Cardiac septum (tissue), 1 donor: ENCODE measurements at regions of chr1 and their contacts with region 1.

Region 1: DNA sequence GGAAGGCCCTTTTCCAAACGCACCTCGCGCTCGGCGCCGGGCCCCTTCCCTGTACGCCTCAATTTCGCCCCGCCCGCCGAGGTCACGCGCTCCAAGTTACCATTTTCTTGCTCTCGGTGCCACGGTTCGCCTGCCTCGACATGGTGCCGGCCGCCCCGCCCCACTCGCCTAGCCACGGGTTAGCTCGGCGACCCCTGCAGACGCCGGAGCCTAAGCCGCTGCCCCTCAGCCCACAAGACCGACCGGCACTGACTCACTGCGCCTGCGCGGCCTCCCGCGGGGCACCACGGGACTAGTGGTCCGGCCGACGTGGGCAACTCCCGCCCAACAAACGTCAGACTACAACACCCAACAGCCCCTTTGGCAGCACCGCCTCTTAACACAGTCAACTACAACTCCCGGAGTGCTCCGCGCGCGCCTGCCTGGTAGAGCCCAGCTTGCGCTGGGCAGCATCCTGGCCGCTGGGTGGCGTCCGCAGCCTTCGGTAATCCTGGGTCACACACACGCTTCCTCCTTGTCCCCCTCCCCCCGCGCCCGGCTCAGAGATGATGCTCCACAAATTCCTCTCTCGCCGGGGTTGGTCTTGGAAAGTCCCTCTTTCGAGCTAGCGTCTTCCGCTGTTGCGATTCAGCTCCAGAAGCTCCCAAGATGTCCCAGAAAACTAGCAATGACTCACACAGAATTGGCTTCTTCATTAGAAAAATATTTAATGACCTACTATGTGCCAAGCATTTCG is at the start of gene TRAPPC3:
- DNase-seq: peak; percentile 100
- total RNA-seq, gene TRAPPC3: 47.9 TPM

Region 2: GRCh38 chr1:36172983-36173382 is 23.6 kb after region 1 on chr1:
- intact Hi-C with region 1: no loop called
- DNase-seq: no peak

Region 3: GRCh38 chr1:36187800-36188593 is 38.6 kb after region 1 on chr1:
- intact Hi-C with region 1: loop called (anchors 1 kb)
- DNase-seq: peak; percentile 93

Region 4: DNA sequence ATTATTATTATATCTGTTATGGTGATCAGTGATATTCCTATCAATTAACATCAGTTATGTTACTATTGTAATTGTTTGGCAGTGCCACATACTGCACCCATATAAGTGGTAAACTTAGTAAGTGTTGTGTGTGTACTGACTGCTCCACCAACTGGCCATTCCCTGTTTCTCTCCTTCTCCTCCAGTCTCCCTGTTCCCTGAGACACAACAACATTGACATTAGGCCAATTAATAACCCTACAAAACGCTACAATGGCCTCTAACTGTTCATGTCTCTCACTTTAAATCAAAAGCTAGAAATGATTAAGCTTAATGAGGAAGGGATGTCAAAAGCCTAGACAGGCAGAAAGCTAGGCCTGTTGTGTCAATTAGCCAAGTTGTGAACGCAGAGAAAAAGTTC is 68.3 kb after region 1 on chr1:
- intact Hi-C with region 1: loop called (anchors 2 kb)
- DNase-seq: no peak

Region 5: DNA sequence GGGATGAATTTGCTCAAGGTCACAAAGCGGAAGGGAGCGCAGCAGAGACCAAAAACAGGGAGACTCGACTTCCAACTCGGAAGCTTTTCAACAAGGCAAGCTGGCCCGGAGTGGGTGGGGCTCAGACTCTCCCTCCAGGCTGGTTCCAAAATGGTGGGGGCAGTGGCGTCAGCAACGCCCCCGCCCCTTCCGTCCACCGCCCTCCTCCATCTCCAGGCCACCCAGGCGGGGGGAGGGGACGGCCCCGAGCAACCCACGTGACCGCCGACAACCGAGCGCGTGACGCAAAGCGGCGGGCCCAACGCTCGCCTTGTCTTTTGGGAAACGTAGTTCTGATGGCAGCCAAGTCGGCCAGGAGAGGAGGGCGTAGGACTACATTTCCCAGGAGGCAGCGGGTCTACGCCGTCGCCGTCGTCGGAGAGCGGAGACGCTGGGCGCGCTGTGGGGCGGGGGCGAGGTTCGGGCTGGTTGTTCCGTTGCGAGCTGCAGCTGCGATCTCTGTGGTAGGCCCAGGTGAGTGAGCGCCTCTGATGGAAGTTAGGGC is 74.7 kb after region 1 on chr1 and contains the start of gene THRAP3:
- intact Hi-C with region 1: loop called (anchors 2 kb)
- DNase-seq: peak; percentile 100
- total RNA-seq, gene THRAP3: 86.5 TPM

Region 6: GRCh38 chr1:36285448-36286101 is 136.2 kb after region 1 on chr1:
- intact Hi-C with region 1: loop called (anchors 2 kb)
- DNase-seq: no peak

Region 7: GRCh38 chr1:36369061-36369861 is 219.9 kb after region 1 on chr1:
- intact Hi-C with region 1: loop called (anchors 5 kb)
- DNase-seq: no peak